ENCODE measurements at regions of chr11 and their contacts with region 1.

Region 1: DNA sequence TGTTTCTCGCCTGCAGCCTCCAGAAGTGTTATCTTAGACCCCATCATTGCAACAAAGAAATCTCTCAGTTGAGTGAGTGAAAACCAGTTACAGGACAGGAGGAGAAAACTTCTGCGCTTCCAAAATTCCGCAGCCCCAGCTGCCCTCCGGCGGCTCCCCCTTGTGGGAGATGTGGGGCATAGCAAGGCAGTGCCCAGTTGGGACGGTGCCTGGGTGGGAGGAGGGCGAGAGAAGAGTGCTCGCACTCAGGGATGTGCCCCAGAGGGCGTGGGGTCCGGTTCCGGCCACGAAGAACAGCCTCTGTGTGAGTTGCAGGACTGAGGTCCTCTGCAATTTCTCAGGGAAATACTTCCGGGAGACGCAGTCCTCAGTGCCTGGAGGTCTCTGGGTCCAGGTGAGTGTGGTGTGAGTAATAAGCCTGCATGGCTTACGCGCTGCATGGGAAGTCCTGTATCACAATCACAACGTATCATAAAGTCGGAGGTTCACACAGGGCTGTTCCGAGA is 87.0 kb upstream of the BLID start:
- DNase-seq: peak; percentile 52
- ATAC-seq: peak; percentile 79
- H3K4me3 Mint-ChIP-seq: no peak overlapping the region
- H3K27ac Mint-ChIP-seq: no peak overlapping the region
- H3K4me1 Mint-ChIP-seq: no peaks in the 10 kb centered on the region
- H3K27me3 Mint-ChIP-seq: peaks cover 19% of the 10 kb centered on the region

Region 2: DNA sequence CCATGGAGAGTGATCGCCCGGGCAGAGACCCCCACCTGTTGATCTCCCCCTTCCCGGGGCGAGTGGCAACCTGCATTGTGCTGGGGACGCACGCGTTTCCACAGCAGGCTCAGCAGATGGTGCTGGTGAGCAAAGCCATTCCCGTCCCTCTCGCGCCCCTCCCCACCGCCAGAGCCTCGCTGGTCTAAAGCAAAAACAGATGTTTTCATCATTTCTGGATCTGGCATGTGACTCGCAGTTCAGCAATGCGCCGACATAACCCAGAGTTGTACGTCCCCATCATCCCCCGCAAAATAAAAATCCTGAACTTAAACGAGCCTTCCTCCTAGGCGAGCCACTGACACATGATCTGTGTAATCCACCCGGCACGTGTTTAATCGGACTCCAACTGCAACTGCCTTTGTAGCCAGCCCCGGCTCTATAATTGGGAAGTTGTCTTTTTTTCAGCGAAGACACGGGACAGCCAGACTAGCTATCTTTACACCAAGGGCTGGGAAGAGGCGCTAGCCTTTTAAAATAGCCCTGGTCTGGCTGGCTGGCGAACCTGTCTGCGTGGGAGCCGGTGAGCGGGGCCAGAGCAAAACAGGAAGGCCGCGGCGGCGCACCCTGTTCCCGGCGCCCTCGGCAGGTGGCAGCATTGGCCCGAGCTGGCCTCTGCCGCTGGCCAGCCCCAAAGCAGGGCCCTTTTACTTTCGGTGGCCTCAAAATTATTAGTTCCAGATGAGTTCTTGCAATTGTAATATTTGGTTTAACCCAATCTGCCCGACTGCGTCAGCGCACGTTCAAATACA is 547.3 kb before region 1 on chr11:
- CTCF ChIA-PET with region 1: interaction called, 35 read pairs
- POLR2A ChIA-PET with region 1: no interaction called
- DNase-seq: peak; percentile 70
- ATAC-seq: peak; percentile 92
- H3K4me3 Mint-ChIP-seq: peak overlapping the region; percentile 62
- H3K27ac Mint-ChIP-seq: no peak overlapping the region
- H3K4me1 Mint-ChIP-seq: peaks cover 21% of the 10 kb centered on the region
- H3K27me3 Mint-ChIP-seq: peaks cover 3% of the 10 kb centered on the region

Measured in activated CD8-positive, alpha-beta T cell treated with anti-CD3 and anti-CD28 coated beads, Interleukin-2, amount 10 ng/mL, durations not matched to agents 7 days and 5 days (primary cell).